T-cell (primary cell): ENCODE measurements at regions of chr2 and their contacts with region 1.

Region 1: DNA sequence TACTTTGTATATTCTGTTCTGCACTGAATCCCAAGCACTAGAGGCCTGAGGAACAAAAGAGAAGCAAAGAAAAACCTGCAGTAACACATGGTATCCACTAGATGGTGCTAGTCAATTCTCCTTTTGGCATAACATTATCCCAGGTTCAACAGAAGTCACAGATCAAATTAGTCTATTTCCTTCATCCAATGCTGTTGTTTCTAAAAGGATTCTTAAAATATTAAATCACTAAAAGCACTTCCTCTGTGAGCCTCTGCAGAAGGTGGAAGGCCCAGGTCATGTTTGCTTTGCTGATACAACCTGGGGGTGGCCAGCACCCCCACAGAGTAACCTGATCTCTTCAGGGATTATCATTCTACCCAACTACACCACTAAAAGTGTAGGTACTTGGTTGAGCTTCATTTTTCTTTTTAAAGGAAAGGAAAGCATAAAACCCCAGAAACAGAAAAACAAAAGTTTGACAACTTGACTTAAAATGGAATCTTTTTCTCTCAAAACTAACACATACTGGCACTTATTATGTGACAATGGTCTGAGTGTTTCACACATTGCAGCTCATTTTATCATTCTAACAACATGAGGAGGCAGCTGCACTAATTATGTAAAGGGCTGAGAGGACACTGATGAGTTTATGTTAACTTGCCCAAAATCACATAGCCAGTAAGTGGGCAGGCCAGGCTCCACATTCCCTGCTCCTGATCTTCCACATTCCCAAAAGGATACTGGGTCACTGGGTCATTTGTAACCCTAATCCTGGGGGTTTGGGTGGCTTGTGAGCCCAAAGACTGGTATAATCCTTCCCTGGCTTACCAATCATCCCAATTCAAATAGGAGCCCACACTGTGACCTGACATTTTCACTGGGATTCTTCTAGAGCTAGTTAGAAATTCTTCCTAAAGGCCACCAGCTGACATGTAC is 66.8 kb upstream of the DNER start:
- DNase-seq: peak in 2 of 35 experiments; percentile 13 to 62
- ATAC-seq: peak; percentile 57 to 74 (median 64)
- H3K4me3 ChIP-seq: no peak overlapping the region
- H3K4me3 Mint-ChIP-seq: no peak overlapping the region
- H3K27ac ChIP-seq: no peak overlapping the region
- H3K27ac Mint-ChIP-seq: peak overlapping the region; percentile 12 to 13
- H3K4me1 ChIP-seq: peaks cover 0 to 7% of the 10 kb centered on the region in 2 experiments
- H3K4me1 Mint-ChIP-seq: peaks cover 31 to 42% (median 31%) of the 10 kb centered on the region in 3 donors
- H3K27me3 ChIP-seq: no peaks in the 10 kb centered on the region
- H3K27me3 Mint-ChIP-seq: no peaks in the 10 kb centered on the region

Region 2: DNA sequence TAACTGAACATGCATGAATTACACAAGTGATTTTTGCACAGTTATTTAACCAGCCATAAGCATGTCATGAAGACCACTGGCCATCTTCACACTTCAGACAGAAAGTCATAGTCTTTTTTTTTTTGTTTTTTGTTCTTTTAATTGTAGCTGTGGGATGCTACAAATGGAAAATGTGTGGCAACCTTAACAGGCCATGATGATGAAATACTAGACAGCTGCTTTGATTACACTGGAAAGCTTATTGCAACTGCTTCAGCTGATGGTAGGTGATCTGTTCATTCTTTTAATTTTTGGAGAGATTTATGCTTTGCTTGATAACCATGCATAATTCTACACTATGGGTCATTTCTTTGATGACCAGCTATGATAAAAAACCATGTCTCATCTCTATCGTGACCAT is 1874.1 kb before region 1 on chr2:
- CTCF ChIA-PET with region 1: interaction called in 1 of 2 experiments, 13 read pairs
- POLR2A ChIA-PET with region 1: no interaction called
- DNase-seq: no peak
- ATAC-seq: no peak
- H3K4me3 ChIP-seq: no peak overlapping the region
- H3K4me3 Mint-ChIP-seq: no peak overlapping the region
- H3K27ac ChIP-seq: no peak overlapping the region
- H3K27ac Mint-ChIP-seq: no peak overlapping the region
- H3K4me1 ChIP-seq: no peaks in the 10 kb centered on the region
- H3K4me1 Mint-ChIP-seq: no peaks in the 10 kb centered on the region
- H3K27me3 ChIP-seq: no peaks in the 10 kb centered on the region
- H3K27me3 Mint-ChIP-seq: no peaks in the 10 kb centered on the region

Region 3: GRCh38 chr2:229740279-229740678 is 40.8 kb before region 1 on chr2:
- CTCF ChIA-PET with region 1: no interaction called
- POLR2A ChIA-PET with region 1: no interaction called
- DNase-seq: no peak
- ATAC-seq: no peak
- H3K4me3 ChIP-seq: no peak overlapping the region
- H3K4me3 Mint-ChIP-seq: no peak overlapping the region
- H3K27ac ChIP-seq: no peak overlapping the region
- H3K27ac Mint-ChIP-seq: no peak overlapping the region
- H3K4me1 ChIP-seq: no peaks in the 10 kb centered on the region
- H3K4me1 Mint-ChIP-seq: no peaks in the 10 kb centered on the region
- H3K27me3 ChIP-seq: peaks cover 0 to 2% of the 10 kb centered on the region in 2 experiments
- H3K27me3 Mint-ChIP-seq: no peaks in the 10 kb centered on the region

Region 4: DNA sequence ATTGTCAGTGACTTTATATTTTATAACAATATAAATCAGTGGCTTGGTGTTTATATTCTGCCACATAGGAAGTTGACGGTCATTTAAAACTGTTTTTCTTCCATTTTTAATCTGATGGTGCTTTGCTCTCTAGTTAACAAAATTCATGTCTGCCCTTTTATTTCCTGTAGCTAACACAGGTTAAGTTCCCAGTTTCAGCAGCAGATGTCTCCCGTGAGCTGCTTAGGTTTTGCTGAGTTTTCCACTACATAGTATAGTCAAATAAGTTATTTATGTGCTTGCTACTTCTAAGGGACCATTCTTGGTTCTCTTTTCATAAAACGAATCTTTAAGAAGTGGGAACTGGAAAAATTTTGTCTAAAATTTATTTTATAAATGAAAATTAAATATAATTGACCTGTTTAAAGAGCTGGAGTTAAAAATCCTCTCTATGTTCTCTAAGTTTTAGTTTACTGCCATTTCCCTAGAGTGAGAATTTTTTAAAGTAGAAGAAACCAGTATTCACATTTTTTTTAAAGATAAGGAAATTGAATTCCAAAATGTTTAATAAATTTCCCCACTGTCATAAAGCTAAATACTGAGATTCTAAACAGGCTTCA is 1323.1 kb after region 1 on chr2:
- CTCF ChIA-PET with region 1: no interaction called
- POLR2A ChIA-PET with region 1: no interaction called
- DNase-seq: peak in 34 of 35 experiments; percentile 6 to 72 (median 42)
- ATAC-seq: peak; percentile 65 to 77 (median 72)
- H3K4me3 ChIP-seq: no peak overlapping the region
- H3K4me3 Mint-ChIP-seq: no peak overlapping the region
- H3K27ac ChIP-seq: no peak overlapping the region
- H3K27ac Mint-ChIP-seq: no peak overlapping the region
- H3K4me1 ChIP-seq: no peaks in the 10 kb centered on the region
- H3K4me1 Mint-ChIP-seq: peaks cover 0 to 4% (median 2%) of the 10 kb centered on the region in 3 donors
- H3K27me3 ChIP-seq: no peaks in the 10 kb centered on the region
- H3K27me3 Mint-ChIP-seq: no peaks in the 10 kb centered on the region